Activated CD4-positive, alpha-beta T cell treated with anti-CD3 and anti-CD28 coated beads for 36 hours (primary cell): ENCODE measurements at regions of chr16 and their contacts with region 1.

Region 1: GRCh38 chr16:29920288-29921033 is 5.6 kb downstream of the KCTD13 start:
- DNase-seq: no peak
- ATAC-seq: no peak
- H3K4me3 Mint-ChIP-seq: no peak overlapping the region
- H3K27ac Mint-ChIP-seq: peak overlapping the region; percentile 2
- H3K4me1 Mint-ChIP-seq: peaks cover 23% of the 10 kb centered on the region
- H3K27me3 Mint-ChIP-seq: no peaks in the 10 kb centered on the region

Region 2: GRCh38 chr16:29790183-29790952 is 130.1 kb before region 1 on chr16 and contains the start of gene KIF22:
- CTCF ChIA-PET with region 1: no interaction called
- POLR2A ChIA-PET with region 1: no interaction called
- intact Hi-C with region 1: no loop called
- DNase-seq: peak; percentile 100
- ATAC-seq: peak; percentile 95
- H3K4me3 Mint-ChIP-seq: peak within 1 kb of the TSS; percentile 91
- H3K27ac Mint-ChIP-seq: peak within 1 kb of the TSS; percentile 97
- H3K4me1 Mint-ChIP-seq: peaks cover 30% of the 10 kb centered on the region
- H3K27me3 Mint-ChIP-seq: no peaks in the 10 kb centered on the region
- total RNA-seq, gene KIF22: 153 to 168 TPM

Region 3: DNA sequence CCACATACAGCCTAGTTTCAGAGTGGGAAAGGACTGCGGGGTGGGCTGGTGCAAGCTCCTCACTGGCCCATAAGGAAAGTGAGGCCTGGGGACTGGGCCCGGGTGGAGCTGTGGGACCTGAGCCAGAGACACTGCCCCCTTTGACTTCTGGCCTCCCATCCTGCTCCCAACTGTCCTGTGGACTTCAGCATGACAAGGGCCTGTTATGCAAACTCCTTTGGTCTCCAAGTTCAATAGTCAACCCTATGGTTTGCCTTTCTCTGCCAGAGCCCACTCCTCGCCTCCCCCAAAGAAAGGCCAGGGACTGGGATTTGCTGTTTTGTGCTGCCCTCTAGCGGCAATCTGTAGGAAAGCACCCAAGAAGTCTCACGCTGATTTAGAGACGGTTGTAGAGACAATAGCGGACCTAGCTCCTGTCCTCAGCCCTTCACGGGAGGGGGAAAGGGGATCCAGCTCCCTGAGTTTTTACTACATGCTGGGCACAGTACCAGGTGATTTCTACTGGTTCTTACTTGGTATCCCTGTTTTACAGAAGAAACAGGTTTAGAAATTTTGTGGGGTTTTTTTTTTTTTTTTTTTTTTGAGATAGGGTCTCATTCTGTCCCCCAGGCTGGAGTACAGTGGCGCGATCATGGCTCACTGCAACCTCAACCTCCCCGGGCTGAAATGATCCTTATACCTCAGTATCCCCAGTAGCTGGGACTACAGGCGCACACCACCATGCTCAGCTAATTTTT is 111.8 kb after region 1 on chr16:
- CTCF ChIA-PET with region 1: interaction called, 18 read pairs
- POLR2A ChIA-PET with region 1: no interaction called
- intact Hi-C with region 1: no loop called
- DNase-seq: peak; percentile 80
- ATAC-seq: peak; percentile 62
- H3K4me3 Mint-ChIP-seq: peak overlapping the region; percentile 8
- H3K27ac Mint-ChIP-seq: no peak overlapping the region
- H3K4me1 Mint-ChIP-seq: peaks cover 8% of the 10 kb centered on the region
- H3K27me3 Mint-ChIP-seq: peaks cover 38% of the 10 kb centered on the region